MCF 10A (cell line): ENCODE measurements at regions of chr1 and their contacts with region 1.

Region 1: DNA sequence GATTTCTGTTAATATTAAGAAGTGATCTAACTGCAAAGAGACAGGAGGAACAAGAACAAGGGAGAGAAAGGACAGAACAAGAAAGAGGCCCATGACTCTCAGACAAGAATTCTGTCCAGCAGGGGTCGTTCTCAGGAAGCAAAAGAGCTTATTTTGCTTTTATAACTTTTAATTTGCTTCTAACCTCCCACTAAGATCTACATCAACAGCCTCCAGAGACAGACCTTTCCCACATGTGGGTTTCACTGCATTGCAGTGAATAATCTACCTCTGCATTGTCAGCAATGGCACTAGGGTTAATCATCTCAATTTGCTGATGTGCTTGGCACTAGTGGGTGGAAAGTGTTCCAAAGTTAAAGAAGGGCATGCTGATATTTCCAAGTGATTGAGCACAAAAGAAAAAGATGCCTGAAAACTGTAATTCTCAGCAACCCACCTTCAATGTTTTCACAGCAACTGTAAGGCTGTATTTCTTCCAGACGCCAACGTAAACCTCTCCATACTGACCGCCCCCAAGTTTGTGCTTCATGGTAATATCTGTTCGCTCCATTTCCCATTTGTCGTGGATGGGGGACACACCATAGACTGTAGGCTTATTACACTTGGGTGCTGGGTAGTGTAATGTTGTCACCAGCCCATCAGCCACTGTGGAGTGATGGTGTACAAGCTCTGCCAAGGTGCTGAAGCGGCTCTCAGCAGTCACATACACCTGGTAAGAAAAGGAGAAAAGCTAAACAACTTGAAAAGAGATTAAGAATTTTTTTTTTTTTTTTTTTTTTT is 39.5 kb downstream of the TOR3A start:
- DNase-seq: peak; percentile 76
- H3K4me3 Mint-ChIP-seq: no peak overlapping the region
- H3K27ac Mint-ChIP-seq: peak overlapping the region; percentile 82
- H3K4me1 Mint-ChIP-seq: peaks cover 18% of the 10 kb centered on the region
- H3K27me3 Mint-ChIP-seq: no peaks in the 10 kb centered on the region
- CTCF ChIP-seq: peak; percentile 73

Region 2: DNA sequence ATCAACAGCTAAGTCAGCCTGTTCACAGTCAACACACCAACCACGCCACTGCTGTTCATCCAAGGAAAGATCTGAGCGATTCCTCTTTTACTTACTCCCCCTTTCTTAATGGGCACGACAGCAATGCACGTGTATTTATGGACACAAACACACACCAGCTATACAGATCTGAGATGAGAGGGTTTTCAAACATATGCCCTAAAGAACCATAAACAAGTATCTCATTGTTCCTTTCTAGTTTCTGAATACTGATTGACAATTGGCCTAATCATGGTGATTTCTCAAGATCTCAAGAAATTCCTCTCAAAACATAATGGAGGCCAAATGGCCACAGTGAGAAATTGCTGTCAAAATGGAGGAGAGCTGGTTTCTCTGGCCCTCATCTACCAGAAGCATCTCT is 21.5 kb before region 1 on chr1:
- CTCF ChIA-PET with region 1: interaction called, 90 read pairs
- POLR2A ChIA-PET with region 1: no interaction called
- intact Hi-C with region 1: no loop called
- DNase-seq: no peak
- H3K4me3 Mint-ChIP-seq: no peak overlapping the region
- H3K27ac Mint-ChIP-seq: no peak overlapping the region
- H3K4me1 Mint-ChIP-seq: no peaks in the 10 kb centered on the region
- H3K27me3 Mint-ChIP-seq: no peaks in the 10 kb centered on the region
- CTCF ChIP-seq: no peak

Region 3: GRCh38 chr1:179137623-179138255 is 16.4 kb after region 1 on chr1:
- CTCF ChIA-PET with region 1: interaction called, 29 read pairs
- POLR2A ChIA-PET with region 1: interaction called, 10 read pairs
- intact Hi-C with region 1: no loop called
- DNase-seq: peak; percentile 45
- H3K4me3 Mint-ChIP-seq: peak overlapping the region; percentile 24
- H3K27ac Mint-ChIP-seq: peak overlapping the region; percentile 76
- H3K4me1 Mint-ChIP-seq: peaks cover 46% of the 10 kb centered on the region
- H3K27me3 Mint-ChIP-seq: no peaks in the 10 kb centered on the region
- CTCF ChIP-seq: no peak

Region 4: DNA sequence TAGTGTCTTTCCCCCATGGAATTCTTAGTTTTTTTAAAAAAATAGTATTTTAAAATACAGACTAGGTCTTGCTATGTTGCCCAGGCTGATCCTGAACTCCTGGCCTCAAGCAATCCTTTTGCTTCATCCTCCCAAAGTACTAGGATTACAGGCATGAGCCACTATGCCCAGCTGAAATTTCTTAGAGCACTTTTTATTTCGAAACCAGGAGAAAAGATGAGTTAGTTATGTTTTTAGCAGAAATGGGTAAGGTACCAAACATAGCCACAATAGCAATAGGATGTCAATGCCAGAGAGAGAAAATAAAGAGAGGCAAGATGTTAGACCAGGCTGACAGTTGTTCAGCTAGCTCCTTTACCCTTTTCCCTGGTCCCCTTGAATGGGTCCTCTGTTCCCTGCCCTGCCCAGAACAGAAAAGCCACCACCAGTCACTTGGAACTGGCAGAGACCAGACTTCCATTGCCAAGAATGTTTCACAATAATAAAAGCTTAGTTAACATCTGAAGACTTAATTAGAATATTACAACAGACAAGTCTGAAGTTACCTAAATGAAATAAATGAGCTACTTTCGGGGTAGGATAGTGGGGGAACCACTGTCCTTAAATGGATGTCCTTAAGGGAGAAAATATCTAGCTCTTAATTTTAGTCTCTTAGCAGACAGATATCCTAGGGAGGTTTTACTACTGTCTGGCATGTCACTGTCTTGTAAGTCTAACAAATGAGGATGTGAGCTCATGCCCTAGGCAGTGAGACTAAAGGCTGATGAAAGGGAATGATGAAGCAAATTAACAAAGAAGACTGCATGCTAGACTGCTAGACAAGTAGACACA is 53.9 kb after region 1 on chr1:
- CTCF ChIA-PET with region 1: interaction called, 30 read pairs
- POLR2A ChIA-PET with region 1: interaction called, 6 read pairs
- intact Hi-C with region 1: no loop called
- DNase-seq: peak; percentile 74
- H3K4me3 Mint-ChIP-seq: peak overlapping the region; percentile 21
- H3K27ac Mint-ChIP-seq: peak overlapping the region; percentile 84
- H3K4me1 Mint-ChIP-seq: peaks cover 24% of the 10 kb centered on the region
- H3K27me3 Mint-ChIP-seq: no peaks in the 10 kb centered on the region
- CTCF ChIP-seq: no peak

Region 5: GRCh38 chr1:179190861-179191260 is 69.5 kb after region 1 on chr1:
- CTCF ChIA-PET with region 1: interaction called, 49 read pairs
- POLR2A ChIA-PET with region 1: interaction called, 5 read pairs
- intact Hi-C with region 1: loop called (anchors 1 kb)
- DNase-seq: no peak
- H3K4me3 Mint-ChIP-seq: no peak overlapping the region
- H3K27ac Mint-ChIP-seq: no peak overlapping the region
- H3K4me1 Mint-ChIP-seq: peaks cover 12% of the 10 kb centered on the region
- H3K27me3 Mint-ChIP-seq: no peaks in the 10 kb centered on the region
- CTCF ChIP-seq: no peak

Region 6: GRCh38 chr1:179293340-179294327 is 172.3 kb after region 1 on chr1 and contains the start of gene SOAT1:
- CTCF ChIA-PET with region 1: interaction called, 17 read pairs
- POLR2A ChIA-PET with region 1: interaction called, 4 read pairs
- intact Hi-C with region 1: loop called (anchors 1 kb)
- DNase-seq: peak; percentile 90
- H3K4me3 Mint-ChIP-seq: peak within 1 kb of the TSS; percentile 78
- H3K27ac Mint-ChIP-seq: peak within 1 kb of the TSS; percentile 68
- H3K4me1 Mint-ChIP-seq: peaks cover 29% of the 10 kb centered on the region
- H3K27me3 Mint-ChIP-seq: no peaks in the 10 kb centered on the region
- CTCF ChIP-seq: peak; percentile 16
- total RNA-seq, gene SOAT1: 28.4 and 39.7 TPM in 2 replicates